ENCODE measurements at regions of chr18 and their contacts with region 1.

Region 1: GRCh38 chr18:24726727-24727492 is 266.5 kb downstream of the HRH4 start:
- DNase-seq: peak; percentile 69
- ATAC-seq: no peak
- H3K4me3 Mint-ChIP-seq: no peak overlapping the region
- H3K27ac Mint-ChIP-seq: no peak overlapping the region
- H3K4me1 Mint-ChIP-seq: no peaks in the 10 kb centered on the region
- H3K27me3 Mint-ChIP-seq: peaks cover 8% of the 10 kb centered on the region
- CTCF ChIP-seq: peak; percentile 84

Region 2: GRCh38 chr18:24368749-24369148 is 358.2 kb before region 1 on chr18:
- CTCF ChIA-PET with region 1: interaction called, 3 read pairs
- POLR2A ChIA-PET with region 1: no interaction called
- intact Hi-C with region 1: loop called (anchors 10 kb)
- DNase-seq: peak; percentile 40
- ATAC-seq: peak; percentile 73
- H3K4me3 Mint-ChIP-seq: no peak overlapping the region
- H3K27ac Mint-ChIP-seq: peak overlapping the region; percentile 1
- H3K4me1 Mint-ChIP-seq: peaks cover 21% of the 10 kb centered on the region
- H3K27me3 Mint-ChIP-seq: no peaks in the 10 kb centered on the region
- CTCF ChIP-seq: no peak

Region 3: GRCh38 chr18:24600076-24600654 is 126.7 kb before region 1 on chr18:
- CTCF ChIA-PET with region 1: interaction called, 35 read pairs
- POLR2A ChIA-PET with region 1: no interaction called
- intact Hi-C with region 1: loop called (anchors 2 kb)
- DNase-seq: peak; percentile 18
- ATAC-seq: no peak
- H3K4me3 Mint-ChIP-seq: no peak overlapping the region
- H3K27ac Mint-ChIP-seq: no peak overlapping the region
- H3K4me1 Mint-ChIP-seq: no peaks in the 10 kb centered on the region
- H3K27me3 Mint-ChIP-seq: peaks cover 14% of the 10 kb centered on the region
- CTCF ChIP-seq: peak; percentile 77

Region 4: DNA sequence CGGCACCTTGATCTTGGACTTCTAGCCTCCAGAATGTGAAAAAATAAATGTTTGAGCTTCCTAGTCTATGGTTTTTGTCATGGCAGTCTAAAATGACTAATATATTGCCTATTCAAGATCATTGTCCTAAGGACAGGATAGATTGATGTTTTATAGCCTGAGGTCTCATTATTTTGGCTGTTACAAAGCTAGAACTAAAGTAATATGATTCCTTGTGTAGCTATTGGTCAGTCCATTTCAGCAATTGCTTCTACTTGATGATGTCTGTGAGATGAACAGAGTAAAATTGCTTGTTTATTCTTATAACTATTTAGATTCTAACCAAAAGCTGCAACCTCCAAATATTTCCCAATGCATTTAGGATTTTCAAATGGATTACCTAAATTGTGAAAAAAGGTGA is 121.5 kb before region 1 on chr18:
- CTCF ChIA-PET with region 1: interaction called, 35 read pairs
- POLR2A ChIA-PET with region 1: no interaction called
- intact Hi-C with region 1: loop called (anchors 2 kb)
- DNase-seq: no peak
- ATAC-seq: no peak
- H3K4me3 Mint-ChIP-seq: no peak overlapping the region
- H3K27ac Mint-ChIP-seq: no peak overlapping the region
- H3K4me1 Mint-ChIP-seq: no peaks in the 10 kb centered on the region
- H3K27me3 Mint-ChIP-seq: peaks cover 2% of the 10 kb centered on the region
- CTCF ChIP-seq: no peak

Region 5: GRCh38 chr18:24704946-24705630 is 21.8 kb before region 1 on chr18:
- CTCF ChIA-PET with region 1: interaction called, 14 read pairs
- POLR2A ChIA-PET with region 1: no interaction called
- intact Hi-C with region 1: no loop called
- DNase-seq: no peak
- ATAC-seq: no peak
- H3K4me3 Mint-ChIP-seq: no peak overlapping the region
- H3K27ac Mint-ChIP-seq: no peak overlapping the region
- H3K4me1 Mint-ChIP-seq: no peaks in the 10 kb centered on the region
- H3K27me3 Mint-ChIP-seq: peaks cover 13% of the 10 kb centered on the region
- CTCF ChIP-seq: no peak

Region 6: DNA sequence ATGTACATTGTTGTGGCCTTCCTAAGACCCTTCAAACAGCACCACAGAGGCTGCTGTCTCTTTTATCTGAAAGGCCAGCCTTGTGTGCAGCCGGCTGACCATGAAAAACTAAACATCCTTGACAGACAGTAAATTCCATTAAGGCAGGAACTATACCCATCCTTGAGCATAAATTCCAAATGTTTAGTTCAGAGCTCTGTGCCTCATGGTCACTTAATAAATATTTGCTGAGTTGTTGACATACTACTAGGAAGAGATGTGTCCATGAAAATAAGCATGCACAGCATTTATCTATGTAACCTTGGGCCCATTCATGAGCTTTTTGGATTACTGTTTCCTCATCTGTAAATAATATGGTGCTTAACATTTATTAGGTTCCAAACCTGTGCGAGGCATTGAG is 158.4 kb after region 1 on chr18:
- CTCF ChIA-PET with region 1: no interaction called
- POLR2A ChIA-PET with region 1: no interaction called
- intact Hi-C with region 1: no loop called
- DNase-seq: no peak
- ATAC-seq: no peak
- H3K4me3 Mint-ChIP-seq: no peak overlapping the region
- H3K27ac Mint-ChIP-seq: no peak overlapping the region
- H3K4me1 Mint-ChIP-seq: no peaks in the 10 kb centered on the region
- H3K27me3 Mint-ChIP-seq: no peaks in the 10 kb centered on the region
- CTCF ChIP-seq: no peak

Measured in activated CD8-positive, alpha-beta T cell treated with anti-CD3 and anti-CD28 coated beads for 36 hours (primary cell).